Prostate gland (tissue), 2 donors: ENCODE measurements at regions of chr4 and their contacts with region 1.

Region 1: GRCh38 chr4:17324386-17324830 is 187.5 kb downstream of the QDPR start:
- DNase-seq: no peak
- H3K4me3 ChIP-seq: no peak overlapping the region
- H3K27ac ChIP-seq: no peak overlapping the region
- H3K4me1 ChIP-seq: no peaks in the 10 kb centered on the region
- H3K27me3 ChIP-seq: no peaks in the 10 kb centered on the region
- CTCF ChIP-seq: peak in 3 of 4 experiments; percentile 32 to 46 (median 32)
- POLR2A ChIP-seq: no peak

Region 2: GRCh38 chr4:16289897-16290554 is 1034.4 kb before region 1 on chr4:
- intact Hi-C with region 1: loop called (anchors 5 kb)
- DNase-seq: no peak
- H3K4me3 ChIP-seq: no peak overlapping the region
- H3K27ac ChIP-seq: no peak overlapping the region
- H3K4me1 ChIP-seq: no peaks in the 10 kb centered on the region
- H3K27me3 ChIP-seq: no peaks in the 10 kb centered on the region
- CTCF ChIP-seq: peak; percentile 9 to 63 (median 62)
- POLR2A ChIP-seq: no peak

Region 3: GRCh38 chr4:16516796-16517439 is 807.5 kb before region 1 on chr4:
- intact Hi-C with region 1: loop called (anchors 10 kb)
- DNase-seq: peak; percentile 6
- H3K4me3 ChIP-seq: no peak overlapping the region
- H3K27ac ChIP-seq: no peak overlapping the region
- H3K4me1 ChIP-seq: no peaks in the 10 kb centered on the region
- H3K27me3 ChIP-seq: no peaks in the 10 kb centered on the region
- CTCF ChIP-seq: peak in 2 of 4 experiments; percentile 12 to 28
- POLR2A ChIP-seq: no peak

Region 4: DNA sequence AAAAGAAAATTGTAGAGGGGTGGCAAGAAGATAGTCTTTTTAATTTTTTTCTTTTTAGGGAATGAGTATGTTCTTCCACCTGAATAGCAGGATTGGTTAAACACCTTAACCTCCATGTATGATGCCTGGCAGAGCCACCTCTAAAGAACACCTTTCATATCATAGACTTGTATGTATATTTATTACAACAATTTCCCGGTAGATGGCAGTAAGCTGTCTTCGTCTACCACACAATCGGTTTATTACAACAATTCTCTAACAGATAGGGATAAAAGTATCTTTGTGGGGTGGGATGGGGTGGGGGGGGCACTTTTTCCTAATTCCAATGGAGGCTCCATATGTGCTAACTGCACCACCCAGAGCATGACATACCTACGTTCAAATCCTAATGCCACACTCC is 681.5 kb before region 1 on chr4:
- intact Hi-C with region 1: loop called (anchors 10 kb)
- DNase-seq: no peak
- H3K4me3 ChIP-seq: no peak overlapping the region
- H3K27ac ChIP-seq: no peak overlapping the region
- H3K4me1 ChIP-seq: no peaks in the 10 kb centered on the region
- H3K27me3 ChIP-seq: no peaks in the 10 kb centered on the region
- CTCF ChIP-seq: no peak
- POLR2A ChIP-seq: no peak

Region 5: GRCh38 chr4:16794816-16795445 is 529.5 kb before region 1 on chr4:
- intact Hi-C with region 1: loop called (anchors 10 kb)
- DNase-seq: no peak
- H3K4me3 ChIP-seq: no peak overlapping the region
- H3K27ac ChIP-seq: no peak overlapping the region
- H3K4me1 ChIP-seq: no peaks in the 10 kb centered on the region
- H3K27me3 ChIP-seq: no peaks in the 10 kb centered on the region
- CTCF ChIP-seq: peak in 2 of 4 experiments; percentile 10 to 32
- POLR2A ChIP-seq: no peak

Region 6: GRCh38 chr4:16916719-16917337 is 407.6 kb before region 1 on chr4:
- intact Hi-C with region 1: loop called (anchors 10 kb)
- DNase-seq: no peak
- H3K4me3 ChIP-seq: no peak overlapping the region
- H3K27ac ChIP-seq: no peak overlapping the region
- H3K4me1 ChIP-seq: no peaks in the 10 kb centered on the region
- H3K27me3 ChIP-seq: no peaks in the 10 kb centered on the region
- CTCF ChIP-seq: peak in 3 of 4 experiments; percentile 14 to 34 (median 29)
- POLR2A ChIP-seq: no peak